Astrocyte of the cerebellum (primary cell): ENCODE measurements at regions of chr3 and their contacts with region 1.

Region 1: DNA sequence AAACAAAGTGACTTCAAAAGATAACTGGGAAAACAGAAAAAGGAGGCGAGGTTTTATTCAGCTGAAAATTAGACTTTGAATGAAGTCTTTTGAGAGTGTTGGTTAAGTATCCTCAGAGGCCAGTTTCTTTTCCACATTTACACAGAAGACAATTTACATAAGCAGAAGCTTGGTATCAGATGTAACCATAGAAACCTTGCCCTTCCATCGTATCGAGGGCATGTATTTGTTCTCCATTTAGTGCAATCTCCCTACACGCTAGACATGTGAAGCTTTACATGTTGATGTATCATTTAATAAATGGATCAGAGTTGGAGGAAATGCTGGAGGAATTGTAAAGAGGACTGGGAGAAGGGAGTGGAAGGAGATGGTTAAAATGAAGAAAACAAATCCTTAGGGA is 161.0 kb upstream of the CRBN start:
- DNase-seq: no peak
- H3K4me3 ChIP-seq: no peak overlapping the region
- CTCF ChIP-seq: no peak

Region 2: GRCh38 chr3:3302964-3303363 is 37.6 kb before region 1 on chr3:
- in situ Hi-C with region 1: loop called (anchors 5 kb)
- DNase-seq: no peak
- H3K4me3 ChIP-seq: no peak overlapping the region
- CTCF ChIP-seq: no peak

Region 3: DNA sequence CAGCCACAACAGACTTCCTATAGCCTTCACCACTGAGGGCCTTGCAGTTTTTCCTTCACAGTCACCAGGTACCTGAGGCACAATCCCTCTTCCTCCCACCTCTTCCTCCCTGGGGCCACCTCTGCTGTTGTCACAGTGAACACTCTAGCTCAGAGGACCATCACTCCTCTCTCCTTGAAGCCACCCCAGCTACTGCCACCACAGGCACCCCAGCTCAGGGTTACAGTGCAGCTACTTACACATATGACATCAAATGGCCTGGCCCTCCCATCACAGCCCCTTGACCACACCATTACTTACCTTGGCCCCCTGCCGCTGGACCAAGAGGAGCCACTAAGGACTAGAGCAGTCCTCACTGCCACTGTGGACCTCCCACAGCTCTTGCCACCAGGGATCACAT is 52.4 kb after region 1 on chr3:
- in situ Hi-C with region 1: no loop called
- DNase-seq: no peak
- H3K4me3 ChIP-seq: no peak overlapping the region
- CTCF ChIP-seq: no peak

Region 4: DNA sequence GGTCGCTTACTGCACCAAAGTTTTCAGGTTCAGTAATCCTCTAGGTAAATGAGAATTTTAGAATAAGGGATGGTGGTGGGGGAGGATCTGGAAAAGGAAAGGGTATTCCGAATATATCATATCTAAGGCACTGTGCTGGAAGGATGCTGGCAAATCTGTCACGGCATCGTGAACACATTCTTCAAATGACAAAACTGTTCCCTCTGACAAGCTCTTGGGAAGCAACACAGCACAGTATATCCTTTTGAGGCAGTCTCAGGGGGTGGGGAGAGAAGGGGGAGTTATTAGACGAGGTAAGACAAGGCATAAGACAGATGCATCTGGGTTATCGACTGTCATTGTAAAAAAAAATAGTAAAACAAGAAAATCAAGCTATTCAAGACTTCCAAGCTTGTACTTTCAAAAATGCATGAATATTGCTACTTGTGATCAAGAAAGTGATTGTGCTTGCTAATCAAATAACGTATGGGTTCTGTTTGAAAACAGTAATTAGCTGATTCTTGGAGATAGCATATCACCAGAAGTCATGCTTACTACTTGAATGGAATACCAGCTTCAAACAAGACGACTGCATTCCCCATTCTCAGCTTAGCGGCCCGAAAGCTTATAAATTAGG is 169.2 kb after region 1 on chr3:
- in situ Hi-C with region 1: no loop called
- DNase-seq: no peak
- H3K4me3 ChIP-seq: no peak overlapping the region
- CTCF ChIP-seq: no peak